Tibial artery (tissue), 4 donors: ENCODE measurements at regions of chr7 and their contacts with region 1.

Region 1: GRCh38 chr7:119620769-119621168 is 652.2 kb upstream of the KCND2 start:
- DNase-seq: no peak
- H3K4me3 ChIP-seq: no peak overlapping the region
- H3K27ac ChIP-seq: no peak overlapping the region
- H3K4me1 ChIP-seq: no peaks in the 10 kb centered on the region
- H3K27me3 ChIP-seq: no peaks in the 10 kb centered on the region
- CTCF ChIP-seq: no peak

Region 2: GRCh38 chr7:119596651-119597050 is 24.1 kb before region 1 on chr7:
- intact Hi-C with region 1: loop called (anchors 2 kb)
- DNase-seq: no peak
- H3K4me3 ChIP-seq: no peak overlapping the region
- H3K27ac ChIP-seq: no peak overlapping the region
- H3K4me1 ChIP-seq: no peaks in the 10 kb centered on the region
- H3K27me3 ChIP-seq: no peaks in the 10 kb centered on the region
- CTCF ChIP-seq: no peak